Activated CD4-positive, alpha-beta T cell treated with anti-CD3 and anti-CD28 coated beads for 36 hours (primary cell): ENCODE measurements at regions of chr4 and their contacts with region 1.

Region 1: DNA sequence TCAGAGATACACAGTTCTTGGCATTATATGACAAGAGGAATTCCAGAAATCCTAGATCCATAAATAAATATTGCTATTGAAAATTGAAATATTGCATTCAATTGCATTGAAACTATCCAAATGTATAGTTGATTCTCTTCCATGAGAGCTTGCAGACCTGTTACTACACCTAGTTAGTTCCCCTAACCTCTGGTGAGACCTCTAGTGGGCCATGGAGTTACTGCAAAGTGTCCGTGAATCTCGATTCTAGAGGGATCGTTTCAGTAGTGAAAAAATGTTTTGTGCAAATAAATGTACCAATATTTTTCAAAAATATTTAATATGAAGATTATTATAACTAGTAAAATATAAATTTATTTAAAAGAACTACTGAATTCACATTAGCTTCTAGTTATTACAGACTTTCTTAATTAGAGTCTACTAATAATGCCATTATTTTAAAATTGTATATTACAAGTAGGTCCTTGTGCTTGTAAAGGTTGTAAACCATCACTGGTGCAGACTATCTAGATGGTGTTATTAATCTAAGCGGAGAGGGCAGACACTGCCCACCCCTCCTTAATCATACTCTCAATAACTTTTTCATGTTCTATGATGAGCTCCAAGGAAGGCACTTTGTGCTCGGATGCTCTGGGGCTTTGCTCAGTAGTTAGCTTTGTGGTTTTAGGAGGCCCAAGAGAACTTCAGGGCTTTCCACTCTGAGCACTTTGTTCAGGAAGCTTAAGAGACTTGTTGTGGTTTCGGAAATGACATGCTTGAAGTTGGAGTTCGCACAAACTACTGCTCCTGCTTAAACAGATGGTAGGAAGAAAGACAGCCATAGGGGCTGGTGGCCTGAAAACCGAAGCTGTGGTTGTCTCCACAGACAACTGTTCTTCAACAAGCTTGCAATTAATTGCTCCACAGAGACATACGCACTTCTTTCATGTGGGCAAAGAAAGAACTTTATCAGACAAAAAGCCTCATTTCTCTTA is 42.8 kb downstream of the IL21 start:
- DNase-seq: peak; percentile 84
- ATAC-seq: peak; percentile 64
- H3K4me3 Mint-ChIP-seq: peak overlapping the region; percentile 68
- H3K27ac Mint-ChIP-seq: peak overlapping the region; percentile 96
- H3K4me1 Mint-ChIP-seq: peaks cover 64% of the 10 kb centered on the region
- H3K27me3 Mint-ChIP-seq: no peaks in the 10 kb centered on the region

Region 2: GRCh38 chr4:122012735-122013134 is 565.4 kb before region 1 on chr4:
- CTCF ChIA-PET with region 1: no interaction called
- POLR2A ChIA-PET with region 1: no interaction called
- intact Hi-C with region 1: no loop called
- DNase-seq: no peak
- ATAC-seq: no peak
- H3K4me3 Mint-ChIP-seq: no peak overlapping the region
- H3K27ac Mint-ChIP-seq: no peak overlapping the region
- H3K4me1 Mint-ChIP-seq: no peaks in the 10 kb centered on the region
- H3K27me3 Mint-ChIP-seq: peaks cover 16% of the 10 kb centered on the region

Region 3: DNA sequence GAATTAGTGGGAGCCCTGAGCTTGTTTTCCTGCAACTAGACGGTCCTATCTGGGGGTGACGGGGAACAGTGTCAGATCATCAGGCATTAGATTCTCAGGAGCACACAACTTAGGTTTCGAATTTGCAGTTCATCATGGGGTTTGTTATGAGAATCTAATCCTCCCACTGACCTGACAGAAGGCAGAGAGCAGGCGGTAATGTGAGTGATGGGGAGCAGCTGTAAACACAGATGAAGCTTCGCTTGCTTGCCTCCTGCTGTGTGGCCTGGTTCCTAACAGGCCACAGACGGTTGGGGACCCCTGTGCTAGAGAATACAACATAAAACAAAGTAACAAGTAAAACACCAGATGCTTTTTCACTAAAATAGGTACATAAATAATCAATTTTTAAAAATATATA is 512.2 kb before region 1 on chr4:
- CTCF ChIA-PET with region 1: no interaction called
- POLR2A ChIA-PET with region 1: no interaction called
- intact Hi-C with region 1: no loop called
- DNase-seq: no peak
- ATAC-seq: no peak
- H3K4me3 Mint-ChIP-seq: no peak overlapping the region
- H3K27ac Mint-ChIP-seq: no peak overlapping the region
- H3K4me1 Mint-ChIP-seq: no peaks in the 10 kb centered on the region
- H3K27me3 Mint-ChIP-seq: peaks cover 6% of the 10 kb centered on the region

Region 4: DNA sequence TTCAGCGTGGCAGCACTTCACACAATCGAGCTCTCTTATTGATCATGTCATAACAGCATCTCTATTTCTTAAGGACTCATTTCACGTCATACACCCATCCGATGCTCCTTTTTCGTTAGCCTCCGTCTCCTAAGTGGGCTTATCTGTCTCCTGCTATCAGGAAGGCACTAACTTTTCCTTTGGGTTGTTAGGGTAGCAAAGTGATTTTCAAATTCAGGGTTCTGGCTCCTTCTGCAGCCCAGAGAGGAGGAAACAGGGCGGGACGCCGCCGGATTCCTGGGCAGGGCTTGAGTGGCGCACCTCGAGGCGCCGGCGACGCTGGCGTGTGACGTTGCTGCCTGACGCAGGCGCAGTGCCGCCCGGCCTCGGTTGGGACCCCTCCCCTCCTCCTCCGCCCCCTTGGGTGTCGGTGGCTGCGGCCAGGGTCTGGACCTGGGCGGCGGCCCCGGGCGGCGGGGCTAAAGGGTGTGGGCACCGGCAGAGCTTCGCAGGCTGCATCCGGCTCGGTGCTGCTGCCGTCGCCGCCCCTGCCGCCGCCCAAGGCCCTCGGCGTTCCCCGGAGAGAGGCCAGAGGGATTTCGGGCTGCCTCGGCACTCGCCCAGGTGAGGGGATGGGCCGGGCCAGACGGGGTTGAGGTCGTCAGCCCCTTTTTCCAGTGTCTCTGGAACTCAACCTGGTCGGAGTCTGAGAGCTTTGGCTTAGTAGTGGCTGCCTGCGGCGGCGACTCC is 425.9 kb before region 1 on chr4 and contains the start of gene BLTP1:
- CTCF ChIA-PET with region 1: no interaction called
- POLR2A ChIA-PET with region 1: no interaction called
- intact Hi-C with region 1: loop called (anchors 2 kb)
- DNase-seq: peak; percentile 93
- ATAC-seq: peak; percentile 91
- H3K4me3 Mint-ChIP-seq: peak within 1 kb of the TSS; percentile 85
- H3K27ac Mint-ChIP-seq: peak within 1 kb of the TSS; percentile 98
- H3K4me1 Mint-ChIP-seq: peaks cover 50% of the 10 kb centered on the region
- H3K27me3 Mint-ChIP-seq: no peaks in the 10 kb centered on the region
- total RNA-seq, gene BLTP1: 16.5 to 20.1 TPM

Region 5: GRCh38 chr4:122450847-122451246 is 127.2 kb before region 1 on chr4:
- CTCF ChIA-PET with region 1: interaction called, 32 read pairs
- POLR2A ChIA-PET with region 1: interaction called, 4 read pairs
- intact Hi-C with region 1: loop called (anchors 1 kb)
- DNase-seq: peak; percentile 47
- ATAC-seq: peak; percentile 64
- H3K4me3 Mint-ChIP-seq: peak overlapping the region; percentile 24
- H3K27ac Mint-ChIP-seq: peak overlapping the region; percentile 88
- H3K4me1 Mint-ChIP-seq: peaks cover 20% of the 10 kb centered on the region
- H3K27me3 Mint-ChIP-seq: no peaks in the 10 kb centered on the region

Region 6: DNA sequence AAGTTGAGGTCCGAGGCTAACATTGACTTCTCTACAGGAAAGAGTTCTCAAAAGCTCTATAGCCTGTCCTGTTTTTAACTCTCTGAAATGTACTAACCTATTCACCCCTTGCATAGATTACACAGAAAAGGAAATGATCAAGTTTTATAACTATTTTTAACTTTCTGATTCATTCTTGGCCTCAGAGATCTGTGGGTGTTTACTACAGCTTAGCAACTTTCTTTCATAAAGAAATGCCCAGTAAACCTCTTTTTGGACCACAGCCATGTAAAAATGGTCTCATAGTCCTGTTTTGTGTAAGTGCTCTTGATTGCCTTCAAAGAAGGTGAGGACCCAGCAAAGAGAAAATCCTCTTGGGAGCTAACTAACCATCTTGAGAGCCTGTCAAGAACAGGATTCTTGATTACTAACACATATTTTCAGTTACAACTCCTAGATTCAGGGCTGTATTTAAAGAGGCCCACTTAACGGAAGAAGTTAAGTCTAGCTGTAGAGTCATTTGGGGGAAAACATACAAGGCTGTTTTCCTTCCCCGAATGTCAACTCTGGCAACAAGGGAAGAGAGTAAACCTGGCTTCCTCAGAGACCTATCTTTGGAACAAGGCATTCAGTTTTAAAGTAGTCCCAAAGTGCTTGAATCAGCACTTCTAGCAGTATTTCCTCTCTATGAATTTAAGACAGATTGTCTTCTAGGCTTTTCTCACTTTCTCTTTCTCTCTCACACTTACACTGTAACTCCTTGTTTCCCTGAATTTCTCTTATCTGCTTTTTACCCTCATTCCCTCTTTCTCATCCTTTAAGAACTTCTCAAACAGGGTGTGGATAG is 35.5 kb before region 1 on chr4:
- CTCF ChIA-PET with region 1: interaction called, 29 read pairs
- POLR2A ChIA-PET with region 1: interaction called, 6 read pairs
- intact Hi-C with region 1: loop called (anchors 1 kb)
- DNase-seq: no peak
- ATAC-seq: peak; percentile 63
- H3K4me3 Mint-ChIP-seq: peak overlapping the region; percentile 53
- H3K27ac Mint-ChIP-seq: peak overlapping the region; percentile 95
- H3K4me1 Mint-ChIP-seq: peaks cover 94% of the 10 kb centered on the region
- H3K27me3 Mint-ChIP-seq: no peaks in the 10 kb centered on the region

Region 7: DNA sequence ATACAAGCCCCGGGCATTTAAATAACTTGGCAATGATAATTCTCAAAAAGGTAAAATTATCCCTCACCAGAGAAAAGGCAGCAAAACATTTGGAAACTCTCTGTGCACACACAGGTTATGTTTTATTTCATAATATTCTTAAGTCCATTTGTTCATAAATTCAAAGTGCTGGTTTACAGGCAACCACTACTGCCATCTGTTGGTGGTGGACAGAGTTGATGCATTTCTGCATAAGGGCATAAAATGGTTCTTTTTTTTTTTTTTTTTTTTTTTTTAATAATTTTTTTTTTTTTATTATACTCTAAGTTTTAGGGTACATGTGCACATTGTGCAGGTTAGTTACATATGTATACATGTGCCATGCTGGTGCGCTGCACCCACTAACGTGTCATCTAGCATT is 74.3 kb after region 1 on chr4:
- CTCF ChIA-PET with region 1: interaction called, 20 read pairs
- POLR2A ChIA-PET with region 1: no interaction called
- intact Hi-C with region 1: no loop called
- DNase-seq: peak; percentile 77
- ATAC-seq: peak; percentile 65
- H3K4me3 Mint-ChIP-seq: no peak overlapping the region
- H3K27ac Mint-ChIP-seq: peak overlapping the region; percentile 9
- H3K4me1 Mint-ChIP-seq: peaks cover 11% of the 10 kb centered on the region
- H3K27me3 Mint-ChIP-seq: no peaks in the 10 kb centered on the region

Region 8: DNA sequence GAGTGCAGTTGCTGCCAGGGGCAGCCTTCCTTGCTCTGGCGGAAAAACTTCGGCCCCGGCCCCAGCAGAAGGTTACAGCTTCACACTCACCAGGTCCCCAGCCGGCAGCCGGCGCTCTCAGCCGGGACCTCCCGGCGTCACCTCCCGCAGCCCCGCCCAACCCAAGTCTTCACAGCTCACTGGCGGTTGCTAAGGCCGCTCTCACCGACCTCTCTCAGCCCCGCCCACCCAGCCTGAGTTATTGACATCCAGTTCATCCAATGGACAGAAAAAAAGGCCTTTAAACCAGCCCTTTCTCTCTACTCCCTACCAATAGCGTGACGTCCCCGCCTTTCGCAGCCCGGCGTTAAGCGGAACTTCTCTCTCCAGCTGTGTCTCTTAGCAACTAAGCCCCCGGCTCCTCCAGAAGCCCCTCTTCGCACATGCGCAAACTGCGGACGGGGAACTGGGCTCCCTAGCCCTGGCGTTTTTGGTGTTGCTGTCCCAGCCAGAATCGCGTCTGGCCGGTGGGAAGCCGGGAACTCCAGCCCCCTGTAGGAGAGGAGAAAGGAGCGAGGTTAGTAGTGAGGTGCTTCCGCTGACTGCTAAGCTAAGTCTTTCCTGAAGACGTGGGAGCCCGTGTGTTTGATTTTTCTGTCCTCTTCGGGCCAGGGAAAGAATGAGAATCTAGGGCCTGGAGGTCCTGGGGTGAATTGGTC is 154.4 kb after region 1 on chr4 and contains the start of gene BBS12:
- CTCF ChIA-PET with region 1: interaction called, 14 read pairs
- POLR2A ChIA-PET with region 1: interaction called, 10 read pairs
- intact Hi-C with region 1: no loop called
- DNase-seq: peak; percentile 99
- ATAC-seq: peak; percentile 100
- H3K4me3 Mint-ChIP-seq: peak within 1 kb of the TSS; percentile 96
- H3K27ac Mint-ChIP-seq: peak within 1 kb of the TSS; percentile 88
- H3K4me1 Mint-ChIP-seq: peaks cover 26% of the 10 kb centered on the region
- H3K27me3 Mint-ChIP-seq: no peaks in the 10 kb centered on the region
- total RNA-seq, gene BBS12: 2.8 to 3.9 TPM

Region 9: GRCh38 chr4:122930862-122931261 is 352.8 kb after region 1 on chr4:
- CTCF ChIA-PET with region 1: interaction called, 14 read pairs
- POLR2A ChIA-PET with region 1: no interaction called
- intact Hi-C with region 1: no loop called
- DNase-seq: no peak
- ATAC-seq: no peak
- H3K4me3 Mint-ChIP-seq: no peak overlapping the region
- H3K27ac Mint-ChIP-seq: no peak overlapping the region
- H3K4me1 Mint-ChIP-seq: peaks cover 5% of the 10 kb centered on the region
- H3K27me3 Mint-ChIP-seq: no peaks in the 10 kb centered on the region